Endothelial cell of umbilical vein (primary cell): ENCODE measurements at regions of chr19 and their contacts with region 1.

Region 1: DNA sequence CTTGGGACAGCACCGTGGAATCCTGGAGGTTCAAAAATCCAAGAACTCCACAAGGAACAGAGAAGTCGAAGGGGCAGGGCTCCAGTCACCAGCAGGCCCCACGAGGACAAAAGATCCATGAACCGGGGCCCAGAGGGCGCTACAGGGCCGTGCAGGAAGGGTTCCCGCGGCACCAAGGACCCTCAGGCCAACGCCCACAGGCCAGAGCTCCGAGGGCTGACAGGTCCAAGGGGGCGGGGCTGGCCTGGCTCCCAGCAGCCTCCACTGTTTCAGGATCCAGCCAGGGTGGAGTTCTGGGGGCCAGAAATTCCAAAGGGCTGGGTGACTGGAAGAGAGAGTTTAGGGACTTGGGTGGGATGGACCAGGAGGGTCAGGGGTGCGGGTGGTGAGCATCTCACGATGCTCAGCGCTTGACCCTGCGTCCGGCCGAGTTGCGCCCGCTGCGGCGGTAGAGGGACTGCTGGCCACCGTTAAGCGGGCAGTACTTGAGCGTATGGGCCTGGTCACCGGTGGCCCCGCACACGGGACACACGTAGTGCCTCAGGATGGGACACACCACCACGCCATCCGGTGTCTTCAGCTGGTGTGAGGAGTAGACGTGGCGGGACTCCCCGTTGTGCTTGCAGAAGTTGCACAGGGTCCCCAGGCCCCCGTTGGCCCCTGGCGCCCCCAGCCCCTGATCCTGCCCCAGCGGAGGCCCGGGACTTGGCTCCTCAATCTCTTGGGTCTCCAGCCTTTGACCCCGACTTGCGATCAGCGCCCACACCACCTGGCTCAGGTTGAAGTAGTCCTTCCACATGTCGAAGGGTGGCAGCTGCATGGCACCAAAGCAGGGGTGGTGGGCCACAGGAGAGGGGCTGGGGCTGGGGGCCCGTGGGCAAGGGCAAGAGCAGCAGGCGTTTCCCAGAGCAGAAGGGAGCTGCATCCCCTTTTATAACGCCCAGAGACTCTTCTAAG is at the start of gene NANOS2:
- DNase-seq: peak; percentile 32
- H3K4me3 ChIP-seq: no peak within 1 kb of the TSS
- H3K27ac ChIP-seq: no peak within 1 kb of the TSS
- H3K4me1 ChIP-seq: no peaks in the 10 kb centered on the region
- H3K27me3 ChIP-seq: no peaks in the 10 kb centered on the region
- CTCF ChIP-seq: peak; percentile 40 to 47
- POLR2A ChIP-seq: no peak
- total RNA-seq, gene NANOS2: not detected in 2 replicates

Region 2: DNA sequence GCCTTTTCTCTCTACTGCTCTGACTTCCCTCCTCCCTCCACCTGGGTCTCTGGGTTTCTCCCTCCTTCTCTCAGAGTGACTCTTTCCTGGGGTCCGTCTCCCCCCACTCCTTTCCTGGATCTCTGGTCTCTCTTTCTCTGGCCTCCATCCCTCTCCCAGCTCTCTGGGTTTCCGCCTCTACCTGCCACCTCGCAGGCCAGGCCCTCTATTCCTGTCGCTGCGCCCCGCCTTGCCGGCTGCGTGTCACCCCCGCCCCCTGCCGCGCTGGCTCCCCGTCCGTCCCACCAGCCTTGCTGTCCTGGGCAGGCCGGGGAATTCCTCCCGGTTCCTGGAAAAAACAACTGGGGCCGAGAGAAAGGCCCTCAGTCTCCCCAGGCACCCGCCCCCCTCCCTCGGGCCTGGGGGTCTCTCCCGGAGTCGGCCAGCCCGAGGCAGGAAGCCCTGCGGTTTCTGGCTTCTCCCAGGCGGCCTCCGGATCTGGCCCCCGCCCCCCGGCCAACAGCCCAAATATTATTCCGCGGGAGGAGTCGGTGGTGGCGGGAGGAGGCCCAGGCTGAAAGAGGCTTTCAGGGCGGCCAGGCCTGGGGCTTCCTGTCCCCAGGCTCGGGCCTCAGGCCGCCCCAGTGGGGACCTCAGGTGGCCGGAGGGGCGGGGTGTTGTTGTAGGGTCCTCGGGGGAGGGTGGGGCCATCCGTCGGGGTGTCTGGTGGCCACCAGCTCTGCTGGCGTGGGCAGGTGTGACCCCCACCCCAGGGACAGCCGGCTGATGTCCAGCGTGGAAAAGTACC is 37.5 kb before region 1 on chr19:
- CTCF ChIA-PET with region 1: no interaction called
- POLR2A ChIA-PET with region 1: no interaction called
- dilution Hi-C with region 1: no loop called
- intact Hi-C with region 1: no loop called
- DNase-seq: peak; percentile 29
- H3K4me3 ChIP-seq: peak overlapping the region in 1 of 3 experiments; percentile 6
- H3K27ac ChIP-seq: no peak overlapping the region
- H3K4me1 ChIP-seq: no peaks in the 10 kb centered on the region
- H3K27me3 ChIP-seq: peaks cover 2 to 6% of the 10 kb centered on the region in 2 experiments
- CTCF ChIP-seq: no peak
- POLR2A ChIP-seq: no peak

Region 3: GRCh38 chr19:46009530-46010510 is 95.7 kb after region 1 on chr19:
- CTCF ChIA-PET with region 1: interaction called, 5 read pairs
- POLR2A ChIA-PET with region 1: no interaction called
- dilution Hi-C with region 1: no loop called
- intact Hi-C with region 1: loop called (anchors 2 kb)
- DNase-seq: peak; percentile 76
- H3K4me3 ChIP-seq: no peak overlapping the region
- H3K27ac ChIP-seq: no peak overlapping the region
- H3K4me1 ChIP-seq: no peaks in the 10 kb centered on the region
- H3K27me3 ChIP-seq: no peaks in the 10 kb centered on the region
- CTCF ChIP-seq: peak; percentile 80 to 92
- POLR2A ChIP-seq: no peak

Region 4: DNA sequence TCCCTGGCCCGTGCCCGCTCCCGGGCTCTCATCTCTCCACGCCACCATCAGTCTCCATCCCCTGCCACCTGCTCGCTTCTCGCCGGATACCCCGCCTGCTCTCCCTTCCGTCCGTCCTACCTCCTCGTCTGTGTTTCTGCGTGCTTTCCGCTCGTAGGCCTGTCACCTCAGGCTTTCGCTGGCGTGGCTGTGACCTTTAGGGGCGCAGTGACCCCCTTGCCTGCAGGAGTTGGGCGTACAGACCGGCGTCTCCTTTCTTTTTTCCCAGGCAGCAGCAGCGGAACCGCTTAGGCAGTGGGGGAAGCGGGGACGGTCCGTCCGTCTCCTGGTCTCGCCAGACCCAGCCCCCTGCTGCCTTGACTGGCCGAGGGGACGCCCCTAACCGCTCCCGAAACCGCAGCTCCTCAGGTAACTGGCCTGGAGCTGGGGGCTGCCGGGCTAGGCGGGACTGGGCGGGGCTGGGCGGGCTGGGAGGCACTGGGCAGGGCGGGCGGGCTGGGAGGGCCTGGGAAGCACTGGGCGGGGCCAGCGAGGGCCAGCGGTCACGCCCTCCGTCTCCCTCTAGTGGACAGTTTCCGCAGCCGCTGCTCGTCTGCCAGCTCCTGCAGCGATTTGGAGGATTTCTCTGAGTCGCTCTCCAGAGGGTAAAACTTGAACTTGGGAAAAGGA is 102.4 kb after region 1 on chr19:
- CTCF ChIA-PET with region 1: interaction called, 5 read pairs
- POLR2A ChIA-PET with region 1: no interaction called
- dilution Hi-C with region 1: no loop called
- intact Hi-C with region 1: loop called (anchors 2 kb)
- DNase-seq: peak; percentile 76
- H3K4me3 ChIP-seq: peak overlapping the region; percentile 47 to 69 (median 59)
- H3K27ac ChIP-seq: no peak overlapping the region
- H3K4me1 ChIP-seq: peaks cover 11% of the 10 kb centered on the region
- H3K27me3 ChIP-seq: peaks cover 4 to 8% of the 10 kb centered on the region in 2 experiments
- CTCF ChIP-seq: peak; percentile 56 to 86
- POLR2A ChIP-seq: no peak